ENCODE measurements at regions of chr1 and their contacts with region 1.

Region 1: DNA sequence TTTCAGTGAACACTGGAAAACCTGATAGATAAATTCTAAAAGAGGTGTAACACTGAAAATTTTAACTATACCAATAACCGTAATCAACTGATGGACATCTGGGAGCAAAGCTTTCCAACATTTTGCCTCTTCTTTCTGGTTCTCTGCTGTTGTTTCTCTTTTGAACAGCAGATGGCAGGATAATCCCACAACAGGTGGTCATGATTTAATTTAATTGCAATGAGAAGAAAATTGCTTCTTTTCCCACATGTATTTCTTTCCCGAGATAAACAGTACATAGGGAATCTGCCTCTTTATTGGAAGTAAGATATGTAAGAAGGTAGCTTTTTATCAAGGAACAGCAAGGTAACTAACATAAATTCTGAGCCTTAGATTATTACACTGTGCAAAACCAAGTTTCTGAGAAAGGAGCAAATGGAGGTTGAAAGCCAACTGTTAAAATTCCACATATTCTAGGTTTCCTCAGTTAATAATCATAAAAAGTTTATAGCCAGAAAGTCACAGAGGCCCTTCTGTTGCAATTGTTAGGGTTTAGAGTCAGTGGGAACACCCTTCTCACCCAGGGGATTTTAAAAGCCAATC is 72.9 kb downstream of the RPS6KA1 start:
- DNase-seq: no peak
- H3K4me3 ChIP-seq: no peak overlapping the region
- H3K27ac ChIP-seq: no peak overlapping the region
- H3K27me3 ChIP-seq: peaks cover 25% of the 10 kb centered on the region
- CTCF ChIP-seq: peak; percentile 85

Region 2: GRCh38 chr1:26399034-26399433 is 203.4 kb before region 1 on chr1:
- CTCF ChIA-PET with region 1: no interaction called
- POLR2A ChIA-PET with region 1: no interaction called
- DNase-seq: no peak
- H3K4me3 ChIP-seq: no peak overlapping the region
- H3K27ac ChIP-seq: no peak overlapping the region
- H3K27me3 ChIP-seq: no peaks in the 10 kb centered on the region
- CTCF ChIP-seq: no peak

Region 3: GRCh38 chr1:26417111-26417759 is 185.2 kb before region 1 on chr1:
- CTCF ChIA-PET with region 1: no interaction called
- POLR2A ChIA-PET with region 1: no interaction called
- DNase-seq: peak; percentile 21
- H3K4me3 ChIP-seq: no peak overlapping the region
- H3K27ac ChIP-seq: no peak overlapping the region
- H3K27me3 ChIP-seq: peaks cover 57% of the 10 kb centered on the region
- CTCF ChIP-seq: peak; percentile 92

Region 4: GRCh38 chr1:26431979-26432695 is 170.3 kb before region 1 on chr1 and contains the start of gene DHDDS:
- CTCF ChIA-PET with region 1: no interaction called
- POLR2A ChIA-PET with region 1: no interaction called
- DNase-seq: peak; percentile 96
- H3K4me3 ChIP-seq: peak within 1 kb of the TSS; percentile 87
- H3K27ac ChIP-seq: peak within 1 kb of the TSS; percentile 63
- H3K27me3 ChIP-seq: peaks cover 4% of the 10 kb centered on the region
- CTCF ChIP-seq: no peak
- polyA plus RNA-seq, gene DHDDS: 45.0 and 51.7 TPM in 2 replicates

Region 5: DNA sequence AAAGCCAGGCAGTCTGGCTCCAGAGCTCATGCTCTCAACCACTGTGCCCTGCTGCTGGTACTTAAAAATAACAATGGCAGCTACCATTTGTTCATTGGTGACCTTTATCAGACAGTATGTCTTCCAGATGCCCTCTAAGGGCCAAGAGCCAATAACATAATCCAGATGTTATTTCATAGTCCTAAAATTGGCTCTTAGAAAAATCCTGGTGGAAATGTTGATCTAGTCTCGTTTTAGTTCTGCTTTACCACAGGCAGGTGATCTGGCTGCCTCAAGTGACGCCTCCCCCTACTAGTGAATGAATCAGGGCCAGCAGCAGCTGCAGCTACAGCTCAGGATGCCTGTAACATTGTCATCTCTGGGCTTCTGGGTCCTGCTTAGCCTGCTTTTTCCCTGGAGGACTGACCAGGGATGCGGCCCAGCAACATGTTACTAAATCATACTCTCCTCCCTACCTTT is 142.9 kb before region 1 on chr1:
- CTCF ChIA-PET with region 1: no interaction called
- POLR2A ChIA-PET with region 1: no interaction called
- DNase-seq: no peak
- H3K4me3 ChIP-seq: no peak overlapping the region
- H3K27ac ChIP-seq: no peak overlapping the region
- H3K27me3 ChIP-seq: no peaks in the 10 kb centered on the region
- CTCF ChIP-seq: no peak

Region 6: DNA sequence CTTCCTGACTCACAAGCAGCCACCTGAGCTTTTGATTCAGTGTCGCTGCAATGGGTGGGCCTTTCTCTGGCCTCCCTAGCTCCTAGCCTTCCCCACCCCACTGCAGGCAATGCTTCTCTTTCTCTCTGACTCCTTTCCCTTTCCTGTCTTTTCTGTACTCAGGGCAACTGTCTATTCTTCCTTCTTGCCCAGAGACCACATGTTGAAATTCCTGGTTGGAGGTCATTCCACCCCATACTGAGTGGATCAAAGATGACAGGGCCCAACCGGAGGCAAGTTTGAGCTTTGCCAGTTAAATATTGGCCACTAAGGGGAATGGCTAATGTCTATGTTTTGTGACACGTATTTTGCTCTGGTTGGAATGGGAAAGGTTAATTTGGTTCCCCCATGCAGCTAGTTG is 28.2 kb after region 1 on chr1:
- CTCF ChIA-PET with region 1: interaction called, 11 read pairs
- POLR2A ChIA-PET with region 1: no interaction called
- DNase-seq: no peak
- H3K4me3 ChIP-seq: no peak overlapping the region
- H3K27ac ChIP-seq: no peak overlapping the region
- H3K27me3 ChIP-seq: no peaks in the 10 kb centered on the region
- CTCF ChIP-seq: no peak

Region 7: GRCh38 chr1:26744075-26744959 is 141.8 kb after region 1 on chr1:
- CTCF ChIA-PET with region 1: interaction called, 13 read pairs
- POLR2A ChIA-PET with region 1: no interaction called
- DNase-seq: peak; percentile 50
- H3K4me3 ChIP-seq: no peak overlapping the region
- H3K27ac ChIP-seq: peak overlapping the region; percentile 79
- H3K27me3 ChIP-seq: no peaks in the 10 kb centered on the region
- CTCF ChIP-seq: no peak

Region 8: GRCh38 chr1:26794391-26794790 is 191.9 kb after region 1 on chr1:
- CTCF ChIA-PET with region 1: interaction called, 424 read pairs
- POLR2A ChIA-PET with region 1: no interaction called
- DNase-seq: no peak
- H3K4me3 ChIP-seq: no peak overlapping the region
- H3K27ac ChIP-seq: no peak overlapping the region
- H3K27me3 ChIP-seq: no peaks in the 10 kb centered on the region
- CTCF ChIP-seq: no peak

Region 9: DNA sequence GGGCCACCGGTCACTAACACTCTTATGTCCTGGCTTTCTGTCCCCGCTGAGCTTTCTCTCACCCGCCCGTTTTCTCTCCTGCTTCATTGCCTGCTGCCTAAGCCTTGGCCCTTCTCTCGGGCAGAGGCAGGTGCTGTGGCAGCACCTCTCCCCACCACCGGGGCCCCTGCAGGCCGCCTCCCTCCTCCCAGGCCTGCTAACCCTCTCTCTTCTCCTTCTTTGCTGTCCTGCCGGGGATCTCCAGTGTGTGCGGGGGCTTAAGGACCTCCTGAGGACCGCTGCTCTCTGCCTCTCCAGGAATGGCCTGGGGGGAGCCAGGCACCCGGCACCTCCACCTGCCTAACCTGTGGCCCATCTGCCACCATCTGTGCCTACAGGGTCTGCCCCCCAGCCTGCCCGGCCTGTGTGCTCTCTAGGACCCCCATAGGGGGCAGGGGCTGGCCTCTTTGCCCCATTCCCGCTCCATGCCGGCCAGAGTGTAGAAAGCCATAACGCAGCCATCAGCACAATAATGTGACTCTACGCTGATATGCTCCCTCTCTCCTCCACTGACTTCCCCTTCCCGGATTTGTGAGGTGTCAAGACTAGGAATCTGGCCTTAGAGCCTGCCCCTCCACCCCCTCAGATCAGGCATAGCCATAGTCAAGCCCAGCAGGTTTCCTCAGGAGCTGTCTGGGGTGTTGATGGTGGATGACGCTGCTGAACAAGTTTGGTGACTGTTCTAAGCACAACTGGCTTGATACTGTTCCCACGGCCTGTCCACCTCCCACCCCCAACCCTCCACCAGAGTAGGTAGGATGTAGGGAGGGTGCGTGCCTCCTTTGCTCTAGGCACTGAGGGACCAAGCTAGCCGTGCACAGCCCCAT is 254.4 kb after region 1 on chr1:
- CTCF ChIA-PET with region 1: interaction called, 12 read pairs
- POLR2A ChIA-PET with region 1: no interaction called
- DNase-seq: no peak
- H3K4me3 ChIP-seq: no peak overlapping the region
- H3K27ac ChIP-seq: no peak overlapping the region
- H3K27me3 ChIP-seq: no peaks in the 10 kb centered on the region
- CTCF ChIP-seq: no peak

Region 10: DNA sequence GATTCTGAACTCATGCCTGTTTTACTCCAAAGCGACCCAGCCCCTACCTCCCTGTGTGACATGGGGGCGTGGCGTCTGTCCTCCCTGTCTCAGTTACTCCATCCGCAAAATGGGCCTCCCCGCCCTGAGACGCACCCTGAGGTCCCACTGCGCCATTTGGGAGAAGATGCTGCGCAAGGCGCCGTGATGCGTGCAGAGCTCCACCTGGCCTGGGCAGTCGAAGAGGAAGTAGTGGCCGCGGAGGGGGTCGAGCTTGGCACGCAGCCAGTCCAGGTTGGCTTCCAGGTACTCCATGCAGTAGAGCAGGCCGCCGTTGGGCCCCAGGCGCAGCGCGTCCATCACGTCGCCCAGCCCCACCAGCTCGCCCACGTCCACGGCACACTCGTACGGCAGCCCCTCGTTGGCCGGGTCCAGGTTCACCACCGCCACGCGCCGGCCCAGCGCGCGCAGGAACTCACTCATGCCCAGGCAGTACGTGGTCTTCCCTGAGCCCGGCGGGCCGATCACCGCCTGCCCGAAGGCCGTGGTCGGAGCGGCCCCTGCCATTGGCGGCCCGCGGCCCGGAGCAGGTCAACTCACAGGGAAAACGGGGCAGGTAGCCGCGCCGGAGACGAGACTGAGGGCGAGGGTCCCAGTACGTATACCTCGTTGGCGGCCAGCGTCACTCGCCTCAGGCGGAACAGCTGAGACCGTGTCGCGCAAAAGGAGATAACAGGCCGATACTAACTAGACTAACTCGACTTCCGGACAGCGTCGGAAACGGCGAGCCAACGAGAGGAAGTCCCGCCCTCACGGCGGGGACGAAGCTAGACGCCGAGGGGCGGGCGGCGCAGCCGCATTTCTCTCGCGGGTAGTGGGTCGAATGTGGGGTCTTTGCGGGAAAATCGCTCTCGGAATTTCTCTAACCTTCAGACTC is 287.3 kb after region 1 on chr1 and contains the start of gene GPN2:
- CTCF ChIA-PET with region 1: interaction called, 13 read pairs
- POLR2A ChIA-PET with region 1: no interaction called
- DNase-seq: no peak
- H3K4me3 ChIP-seq: peak within 1 kb of the TSS; percentile 98
- H3K27ac ChIP-seq: peak within 1 kb of the TSS; percentile 80
- H3K27me3 ChIP-seq: no peaks in the 10 kb centered on the region
- CTCF ChIP-seq: no peak
- polyA plus RNA-seq, gene GPN2: 28.7 and 40.3 TPM in 2 replicates

Measured in AG04450 (cell line).